GM12878 (cell line): ENCODE measurements at regions of chr17 and their contacts with region 1.

Region 1: DNA sequence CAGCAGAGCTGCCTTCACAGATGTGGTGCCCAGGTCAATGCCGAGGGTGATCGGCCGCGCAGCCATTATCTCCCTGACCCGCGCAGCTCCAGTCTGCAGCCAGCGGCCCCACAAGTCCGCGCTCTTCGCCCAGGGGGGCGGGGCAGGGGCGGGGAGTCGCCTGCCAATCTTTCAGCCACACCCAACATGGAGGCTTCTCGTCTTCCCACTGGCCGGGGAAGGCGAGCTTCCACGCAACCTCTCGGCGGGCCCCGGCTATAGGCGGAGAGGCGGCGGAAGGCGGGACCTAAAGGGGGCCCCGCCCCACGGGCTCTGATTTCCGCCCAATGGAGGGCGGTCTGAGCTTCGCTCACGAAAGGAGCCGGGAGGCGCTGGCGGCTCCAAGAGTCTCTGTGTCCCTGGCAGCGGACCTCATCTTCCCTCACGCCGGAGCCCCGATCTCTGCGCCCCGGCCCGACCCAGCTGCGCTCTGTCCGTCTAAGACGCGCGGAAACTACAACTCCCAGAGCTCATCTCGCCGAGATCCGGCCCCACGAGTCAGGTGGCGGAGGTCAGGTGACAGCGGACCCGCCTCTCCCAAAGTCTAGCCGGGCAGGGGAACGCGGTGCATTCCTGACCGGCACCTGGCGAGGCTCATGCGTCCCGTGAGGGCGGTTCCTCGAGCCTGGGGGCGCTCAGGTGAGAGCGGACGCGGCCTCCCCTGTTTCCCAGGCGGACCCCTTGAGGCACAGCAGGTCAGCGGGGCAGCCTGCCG is at the starts of genes CTNS and SHPK:
- DNase-seq: peak; percentile 68
- ATAC-seq: peak; percentile 99
- H3K4me3 ChIP-seq: peak within 1 kb of the TSS; percentile 94
- H3K27ac ChIP-seq: peak within 1 kb of the TSS; percentile 98
- H3K4me1 ChIP-seq: peaks cover 4% of the 10 kb centered on the region; the same call in 1 of the 2 replicates
- H3K27me3 ChIP-seq: no peaks in the 10 kb centered on the region
- CTCF ChIP-seq: no peak
- EP300 ChIP-seq: no peak
- POLR2A ChIP-seq: peak; percentile 77
- RAD21 ChIP-seq: no peak
- polyA plus RNA-seq, gene CTNS: 0.92 to 1.7 TPM
- polyA plus RNA-seq, gene SHPK: 1.7 to 1.8 TPM

Region 2: DNA sequence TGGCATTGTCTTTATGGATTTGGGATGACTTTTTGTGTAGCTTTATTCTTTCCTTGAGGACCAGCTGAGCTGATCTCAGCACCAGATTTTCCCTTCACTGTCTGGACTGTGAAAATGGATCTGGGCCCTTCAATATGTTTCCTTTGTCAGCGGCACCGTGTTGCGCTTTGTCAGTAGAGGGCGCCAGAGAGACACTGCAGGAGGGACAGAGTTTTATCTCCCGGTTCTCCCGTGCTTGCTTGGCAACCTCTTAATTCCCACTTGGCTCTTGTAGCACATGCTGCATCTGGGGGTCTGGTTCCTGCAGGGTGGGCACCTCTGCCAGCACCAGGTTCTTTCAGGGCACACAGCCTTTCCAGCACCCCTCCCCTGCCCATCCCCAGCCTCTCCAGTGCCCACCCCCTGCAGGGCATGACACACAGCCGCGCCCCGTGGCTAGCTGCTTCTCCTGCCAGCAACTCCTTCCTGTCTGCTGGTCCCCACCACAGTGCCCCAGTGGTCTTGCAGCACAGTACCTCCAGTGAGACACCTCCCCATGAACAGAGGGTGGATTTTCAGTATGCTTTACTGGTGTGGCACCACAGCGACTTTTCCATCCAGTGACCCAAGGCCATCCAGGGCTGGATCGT is 592.5 kb before region 1 on chr17:
- CTCF ChIA-PET with region 1: no interaction called
- POLR2A ChIA-PET with region 1: no interaction called
- RAD21 ChIA-PET with region 1: no interaction called
- SMC1A ChIA-PET with region 1: no interaction called
- in situ Hi-C with region 1: loop called (anchors 5 kb)
- intact Hi-C with region 1: loop called (anchors 10 kb)
- DNase-seq: no peak
- ATAC-seq: no peak
- H3K4me3 ChIP-seq: no peak overlapping the region
- H3K27ac ChIP-seq: no peak overlapping the region
- H3K4me1 ChIP-seq: no peaks in the 10 kb centered on the region
- H3K27me3 ChIP-seq: no peaks in the 10 kb centered on the region
- CTCF ChIP-seq: peak; percentile 27 to 53 (median 52); a peak in 4 of 6 replicates
- EP300 ChIP-seq: no peak
- POLR2A ChIP-seq: no peak
- RAD21 ChIP-seq: 0 out of 2 replicates have a peak, but pooled peaks have one; percentile 6

Region 3: GRCh38 chr17:3558603-3559269 is 77.6 kb before region 1 on chr17:
- CTCF ChIA-PET with region 1: interaction called, 4 read pairs
- POLR2A ChIA-PET with region 1: interaction called, 6 read pairs
- RAD21 ChIA-PET with region 1: interaction called, 26 read pairs
- SMC1A ChIA-PET with region 1: interaction called, 6 read pairs
- in situ Hi-C with region 1: no loop called
- intact Hi-C with region 1: loop called (anchors 2 kb)
- DNase-seq: peak; percentile 87
- ATAC-seq: peak; percentile 74
- H3K4me3 ChIP-seq: peak overlapping the region; percentile 28; the same call in 1 of the 2 replicates
- H3K27ac ChIP-seq: peak overlapping the region; percentile 92
- H3K4me1 ChIP-seq: peaks cover 51% of the 10 kb centered on the region
- H3K27me3 ChIP-seq: no peaks in the 10 kb centered on the region
- CTCF ChIP-seq: no peak
- EP300 ChIP-seq: peak; percentile 89 to 92
- POLR2A ChIP-seq: peak; percentile 97
- RAD21 ChIP-seq: no peak

Region 4: DNA sequence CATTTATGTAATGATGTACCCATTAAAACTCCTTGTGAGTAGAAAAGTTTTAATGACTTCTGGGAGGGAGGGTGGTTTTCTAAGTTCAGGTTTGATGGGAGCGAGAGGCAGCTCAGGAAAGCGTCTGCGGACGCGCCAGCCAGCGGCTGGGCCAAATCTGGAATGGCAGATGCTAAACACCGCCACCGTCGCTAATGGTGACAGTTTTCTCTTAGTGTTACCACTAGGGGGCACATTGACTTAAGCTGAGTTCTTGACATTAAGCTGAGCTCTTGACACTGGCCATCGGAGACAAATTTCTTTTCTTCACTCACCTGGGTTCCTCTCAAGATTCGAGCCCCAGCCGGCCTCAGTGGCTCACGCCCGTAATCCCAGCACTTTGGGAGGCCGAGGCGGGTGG is 33.8 kb before region 1 on chr17:
- CTCF ChIA-PET with region 1: interaction called, 17 read pairs
- POLR2A ChIA-PET with region 1: interaction called, 4 read pairs
- RAD21 ChIA-PET with region 1: interaction called, 5 read pairs
- SMC1A ChIA-PET with region 1: interaction called, 4 read pairs
- in situ Hi-C with region 1: no loop called
- intact Hi-C with region 1: no loop called
- DNase-seq: no peak
- ATAC-seq: peak; percentile 88
- H3K4me3 ChIP-seq: no peak overlapping the region
- H3K27ac ChIP-seq: no peak overlapping the region
- H3K4me1 ChIP-seq: no peaks in the 10 kb centered on the region
- H3K27me3 ChIP-seq: no peaks in the 10 kb centered on the region
- CTCF ChIP-seq: peak; percentile 40 to 69 (median 47)
- EP300 ChIP-seq: no peak
- POLR2A ChIP-seq: no peak
- RAD21 ChIP-seq: 0 out of 2 replicates have a peak, but pooled peaks have one; percentile 23

Region 5: DNA sequence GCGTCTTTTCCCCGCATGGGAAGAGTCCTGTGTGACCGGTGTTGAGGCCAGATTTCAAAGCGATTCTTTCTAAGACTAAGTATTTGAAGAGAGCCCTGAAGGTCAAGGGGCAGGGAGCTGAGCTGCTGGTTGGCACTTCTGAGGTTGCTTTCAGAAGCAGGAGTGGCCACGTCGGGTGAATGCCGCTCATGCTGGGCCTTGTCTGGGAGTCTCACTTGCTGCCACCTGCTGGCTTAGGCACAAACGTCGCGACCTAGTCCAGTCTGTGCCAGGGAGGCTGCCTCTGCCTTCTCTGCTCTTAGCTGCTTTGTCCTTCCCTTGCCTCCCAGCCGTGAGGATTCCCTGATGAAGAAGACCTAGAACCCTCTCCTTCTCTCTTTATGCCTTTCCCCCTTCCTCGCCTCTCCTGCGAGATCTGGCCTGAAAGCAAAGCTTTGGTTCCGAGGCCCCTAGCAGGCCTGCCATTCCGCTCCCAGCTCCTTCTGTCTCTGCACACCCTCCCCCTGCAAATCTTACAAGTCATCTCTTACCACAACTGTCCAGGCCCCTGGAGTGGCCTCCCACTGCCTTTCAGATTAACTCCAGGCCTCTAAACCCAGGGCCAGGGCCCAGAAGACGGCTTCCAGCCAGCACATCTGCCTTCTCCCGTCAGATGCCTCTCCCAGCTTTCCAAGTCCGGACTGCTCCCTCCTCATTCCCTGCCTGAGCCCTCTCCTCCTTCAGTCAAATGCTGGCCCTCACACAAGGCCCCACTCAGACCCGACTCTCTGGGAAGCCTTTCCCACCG is 11.6 kb after region 1 on chr17:
- CTCF ChIA-PET with region 1: interaction called, 10 read pairs
- POLR2A ChIA-PET with region 1: interaction called, 3 read pairs
- RAD21 ChIA-PET with region 1: interaction called, 9 read pairs
- SMC1A ChIA-PET with region 1: interaction called, 5 read pairs
- in situ Hi-C with region 1: no loop called
- intact Hi-C with region 1: no loop called
- DNase-seq: no peak
- ATAC-seq: peak; percentile 87
- H3K4me3 ChIP-seq: no peak overlapping the region
- H3K27ac ChIP-seq: no peak overlapping the region
- H3K4me1 ChIP-seq: peaks cover 4% of the 10 kb centered on the region
- H3K27me3 ChIP-seq: no peaks in the 10 kb centered on the region
- CTCF ChIP-seq: peak; percentile 48 to 63 (median 49)
- EP300 ChIP-seq: no peak
- POLR2A ChIP-seq: no peak
- RAD21 ChIP-seq: peak; percentile 40

Region 6: DNA sequence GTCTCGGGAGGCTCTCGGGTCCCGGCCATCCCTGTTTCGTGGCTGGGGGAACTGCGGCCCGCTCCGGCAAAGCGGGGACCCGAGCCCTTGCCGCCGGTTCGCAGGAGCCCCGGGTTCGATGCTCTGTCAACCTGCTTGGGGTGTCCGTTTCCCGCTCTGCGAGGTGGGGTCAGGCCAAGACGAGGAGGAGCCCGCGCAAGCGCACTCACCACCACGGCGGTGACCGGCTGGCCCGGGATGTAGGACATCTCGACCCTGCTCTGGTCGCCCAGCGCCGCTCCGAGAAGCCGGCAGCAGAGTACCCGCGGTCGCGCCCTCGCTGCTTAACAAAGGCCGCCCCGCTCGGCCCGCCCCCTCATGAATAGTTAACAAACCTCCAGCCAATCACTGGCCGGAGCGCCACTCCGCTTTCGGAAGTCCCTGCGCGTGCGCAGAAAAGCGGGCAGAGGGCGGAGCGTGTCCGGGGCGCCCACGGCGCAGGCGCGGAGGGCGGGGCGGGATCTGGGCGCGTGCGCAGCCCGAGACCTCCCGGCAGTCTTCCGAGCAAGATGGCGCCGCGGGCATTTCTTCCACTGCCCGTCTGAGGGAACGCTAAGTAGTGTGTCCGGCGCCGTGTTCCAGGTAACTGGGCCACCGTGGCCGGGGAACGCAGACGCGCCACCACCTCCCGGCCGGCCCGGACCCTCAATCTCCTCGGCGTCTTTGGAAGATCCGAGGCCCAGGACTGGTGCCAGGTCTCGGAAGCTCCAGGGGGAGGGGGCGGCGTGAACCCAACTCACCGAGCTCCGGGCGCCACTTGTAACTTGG is 32.2 kb after region 1 on chr17 and contains the starts of genes EMC6 and TAX1BP3:
- CTCF ChIA-PET with region 1: interaction called, 5 read pairs
- POLR2A ChIA-PET with region 1: interaction called, 11 read pairs
- RAD21 ChIA-PET with region 1: no interaction called
- SMC1A ChIA-PET with region 1: no interaction called
- in situ Hi-C with region 1: no loop called
- intact Hi-C with region 1: no loop called
- DNase-seq: peak; percentile 86
- ATAC-seq: peak; percentile 97
- H3K4me3 ChIP-seq: peak within 1 kb of the TSS; percentile 84
- H3K27ac ChIP-seq: peak within 1 kb of the TSS; percentile 86
- H3K4me1 ChIP-seq: peaks cover 8% of the 10 kb centered on the region
- H3K27me3 ChIP-seq: no peaks in the 10 kb centered on the region
- CTCF ChIP-seq: no peak
- EP300 ChIP-seq: no peak
- POLR2A ChIP-seq: peak; percentile 96
- RAD21 ChIP-seq: no peak
- polyA plus RNA-seq, gene EMC6: 5.1 to 32.2 TPM
- polyA plus RNA-seq, gene TAX1BP3: 1.00 to 4.7 TPM

Region 7: DNA sequence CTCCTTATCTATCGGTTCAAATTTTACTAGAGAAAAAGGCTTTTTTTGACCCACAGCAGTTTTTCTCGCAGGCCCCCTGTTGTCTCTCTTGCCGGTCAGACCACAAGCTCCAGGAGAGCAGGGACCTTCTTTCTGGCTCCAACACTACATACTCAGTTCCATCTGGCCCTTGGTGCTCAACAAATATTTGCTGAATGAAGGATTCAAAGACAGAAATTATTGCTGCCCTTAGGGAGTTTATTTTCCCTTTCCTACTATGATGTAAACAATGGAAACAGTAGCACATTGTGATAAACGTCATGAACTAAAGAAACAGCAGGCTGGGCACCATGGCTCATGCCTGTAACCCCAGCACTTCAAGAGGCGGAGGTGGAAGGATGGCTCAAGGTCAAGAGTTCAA is 386.9 kb after region 1 on chr17:
- CTCF ChIA-PET with region 1: no interaction called
- POLR2A ChIA-PET with region 1: no interaction called
- RAD21 ChIA-PET with region 1: no interaction called
- SMC1A ChIA-PET with region 1: no interaction called
- in situ Hi-C with region 1: no loop called
- intact Hi-C with region 1: no loop called
- DNase-seq: no peak
- ATAC-seq: no peak
- H3K4me3 ChIP-seq: no peak overlapping the region
- H3K27ac ChIP-seq: no peak overlapping the region
- H3K4me1 ChIP-seq: no peaks in the 10 kb centered on the region
- H3K27me3 ChIP-seq: no peaks in the 10 kb centered on the region
- CTCF ChIP-seq: no peak
- EP300 ChIP-seq: no peak
- POLR2A ChIP-seq: no peak
- RAD21 ChIP-seq: no peak